ENCODE measurements at regions of chr1 and their contacts with region 1.

Region 1: DNA sequence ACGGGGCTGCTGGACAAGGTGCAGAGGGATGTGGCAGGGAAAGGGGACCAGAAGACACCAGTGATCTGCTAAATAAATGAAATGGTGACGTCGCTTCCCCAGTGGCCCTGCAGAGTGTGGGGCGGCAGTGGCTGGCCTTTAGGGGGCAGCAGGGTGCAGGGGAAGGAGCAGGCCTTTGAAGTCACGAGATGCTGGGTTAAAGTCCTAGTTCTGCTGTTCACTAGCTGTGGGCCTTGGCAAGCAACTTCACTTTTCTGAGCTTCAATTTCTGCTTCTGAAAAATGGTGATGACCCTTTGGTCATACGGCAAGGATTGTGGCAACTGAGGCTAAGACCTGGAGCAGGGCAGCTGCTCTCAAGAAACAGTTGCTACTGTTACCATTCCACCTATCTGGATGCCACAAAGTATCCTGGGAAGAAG is 9.2 kb upstream of the GALE start:
- DNase-seq: peak; percentile 69 to 70
- ATAC-seq: peak; percentile 79 to 91
- H3K4me3 ChIP-seq: no peak overlapping the region
- H3K27ac ChIP-seq: no peak overlapping the region
- H3K4me1 ChIP-seq: 0 out of 3 replicates have a peak, but pooled peaks cover 3% of the 10 kb centered on the region
- CTCF ChIP-seq: peak; percentile 51
- EP300 ChIP-seq: no peak
- POLR2A ChIP-seq: no peak
- RAD21 ChIP-seq: peak; percentile 62 to 65

Region 2: GRCh38 chr1:23825076-23825761 is 15.5 kb after region 1 on chr1 and contains the start of gene HMGCL:
- CTCF ChIA-PET with region 1: interaction called, 57 read pairs
- POLR2A ChIA-PET with region 1: interaction called, 3 read pairs
- DNase-seq: peak; percentile 83
- ATAC-seq: peak; percentile 96 to 98
- H3K4me3 ChIP-seq: peak within 1 kb of the TSS; percentile 80
- H3K27ac ChIP-seq: peak within 1 kb of the TSS; percentile 85 to 100
- H3K4me1 ChIP-seq: no peaks in the 10 kb centered on the region; the same call in 1 of the 3 replicates
- CTCF ChIP-seq: no peak
- EP300 ChIP-seq: no peak
- POLR2A ChIP-seq: peak; percentile 84
- RAD21 ChIP-seq: no peak
- polyA plus RNA-seq, gene HMGCL: 18.0 and 18.9 TPM in 2 replicates

Measured in A549 (cell line).